Activated CD4-positive, alpha-beta memory T cell treated with anti-CD3 and anti-CD28 coated beads, Interleukin-2, amount 10 ng/mL, durations not matched to agents 7 days and 5 days (primary cell): ENCODE measurements at regions of chr2 and their contacts with region 1.

Region 1: DNA sequence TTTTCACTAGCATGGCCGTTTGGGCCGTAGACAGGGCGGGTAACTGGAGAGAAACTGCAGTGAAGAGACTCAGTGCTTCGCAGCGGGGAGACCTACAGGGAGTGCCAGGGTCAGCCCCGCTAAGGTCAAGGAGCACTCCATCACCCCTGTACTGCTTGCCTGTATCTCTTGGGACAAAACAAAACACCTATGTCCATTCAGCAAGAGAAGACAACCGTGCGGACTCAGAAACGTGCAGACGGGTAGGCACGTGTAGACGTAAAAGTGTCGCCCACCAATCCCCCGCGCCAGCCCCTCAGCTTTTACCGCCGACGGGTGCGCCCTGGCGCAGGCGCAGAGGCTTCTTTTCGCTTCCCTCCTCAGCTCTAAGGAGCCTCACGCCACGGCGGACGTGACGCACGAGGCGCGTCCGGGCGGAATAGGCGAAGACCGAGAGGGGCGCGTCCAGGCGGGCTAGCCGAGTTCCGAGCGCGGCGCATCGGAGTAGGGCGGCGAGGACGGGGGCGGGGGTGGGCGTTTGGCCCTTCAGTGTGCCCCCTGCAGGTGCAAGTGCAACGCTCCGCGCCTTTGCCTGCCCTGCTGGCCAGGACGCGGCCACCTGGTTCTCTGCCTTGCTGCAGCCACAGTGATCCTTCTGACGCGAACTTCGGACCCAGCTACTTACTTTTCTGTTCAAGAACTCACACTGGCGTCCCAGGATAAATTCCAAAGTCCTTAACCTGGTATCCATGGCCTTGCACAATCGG is 3.3 kb upstream of the SOS1 start:
- DNase-seq: peak; percentile 97
- H3K4me3 Mint-ChIP-seq: peak overlapping the region; percentile 89
- H3K27ac Mint-ChIP-seq: peak overlapping the region; percentile 92
- H3K4me1 Mint-ChIP-seq: peaks cover 63% of the 10 kb centered on the region
- H3K27me3 Mint-ChIP-seq: no peaks in the 10 kb centered on the region

Region 2: GRCh38 chr2:39107156-39107555 is 17.0 kb before region 1 on chr2:
- CTCF ChIA-PET with region 1: interaction called, 6 read pairs
- POLR2A ChIA-PET with region 1: interaction called, 125 read pairs
- DNase-seq: no peak
- H3K4me3 Mint-ChIP-seq: no peak overlapping the region
- H3K27ac Mint-ChIP-seq: peak overlapping the region; percentile 40
- H3K4me1 Mint-ChIP-seq: peaks cover 72% of the 10 kb centered on the region
- H3K27me3 Mint-ChIP-seq: no peaks in the 10 kb centered on the region

Region 3: GRCh38 chr2:39141331-39142271 is 17.4 kb after region 1 on chr2:
- CTCF ChIA-PET with region 1: interaction called, 42 read pairs
- POLR2A ChIA-PET with region 1: interaction called, 770 read pairs
- DNase-seq: peak; percentile 71
- H3K4me3 Mint-ChIP-seq: no peak overlapping the region
- H3K27ac Mint-ChIP-seq: peak overlapping the region; percentile 93
- H3K4me1 Mint-ChIP-seq: peaks cover 72% of the 10 kb centered on the region
- H3K27me3 Mint-ChIP-seq: no peaks in the 10 kb centered on the region

Region 4: DNA sequence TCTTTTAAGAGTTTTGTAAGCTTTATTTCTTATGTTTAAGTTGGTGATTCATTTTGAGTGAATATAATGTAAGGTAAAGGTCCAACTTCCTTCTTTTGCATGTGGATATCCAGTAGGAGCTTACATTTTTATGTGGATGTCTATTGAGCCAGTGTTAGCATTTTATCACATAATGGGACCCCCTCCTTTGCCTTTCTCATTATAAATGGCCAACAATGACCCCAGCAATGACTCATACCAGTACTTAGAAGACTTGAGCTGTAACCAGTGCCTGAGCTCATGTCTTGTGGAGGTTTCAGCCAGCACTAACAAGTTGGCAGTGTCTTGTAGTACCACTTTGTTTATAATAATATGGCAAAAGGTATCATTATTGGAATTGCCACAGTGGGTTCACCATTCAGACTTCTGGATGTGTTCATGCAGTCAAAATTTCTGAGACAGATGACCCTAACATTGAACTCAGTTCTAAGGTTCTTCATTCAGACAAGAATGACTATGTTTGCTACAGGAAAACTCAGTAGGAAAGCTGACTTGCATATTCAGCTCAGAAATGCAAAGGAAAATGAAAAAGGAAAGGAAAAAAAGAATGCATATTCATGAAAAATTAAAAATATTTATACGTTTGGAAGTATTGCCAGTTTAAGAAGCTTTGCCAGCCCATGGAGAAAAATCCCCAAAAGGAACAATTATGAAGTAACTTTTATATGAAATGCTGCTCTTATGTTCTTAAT is 78.6 kb after region 1 on chr2:
- CTCF ChIA-PET with region 1: interaction called, 3 read pairs
- POLR2A ChIA-PET with region 1: interaction called, 16 read pairs
- DNase-seq: no peak
- H3K4me3 Mint-ChIP-seq: no peak overlapping the region
- H3K27ac Mint-ChIP-seq: peak overlapping the region; percentile 38
- H3K4me1 Mint-ChIP-seq: peaks cover 26% of the 10 kb centered on the region
- H3K27me3 Mint-ChIP-seq: no peaks in the 10 kb centered on the region

Region 5: DNA sequence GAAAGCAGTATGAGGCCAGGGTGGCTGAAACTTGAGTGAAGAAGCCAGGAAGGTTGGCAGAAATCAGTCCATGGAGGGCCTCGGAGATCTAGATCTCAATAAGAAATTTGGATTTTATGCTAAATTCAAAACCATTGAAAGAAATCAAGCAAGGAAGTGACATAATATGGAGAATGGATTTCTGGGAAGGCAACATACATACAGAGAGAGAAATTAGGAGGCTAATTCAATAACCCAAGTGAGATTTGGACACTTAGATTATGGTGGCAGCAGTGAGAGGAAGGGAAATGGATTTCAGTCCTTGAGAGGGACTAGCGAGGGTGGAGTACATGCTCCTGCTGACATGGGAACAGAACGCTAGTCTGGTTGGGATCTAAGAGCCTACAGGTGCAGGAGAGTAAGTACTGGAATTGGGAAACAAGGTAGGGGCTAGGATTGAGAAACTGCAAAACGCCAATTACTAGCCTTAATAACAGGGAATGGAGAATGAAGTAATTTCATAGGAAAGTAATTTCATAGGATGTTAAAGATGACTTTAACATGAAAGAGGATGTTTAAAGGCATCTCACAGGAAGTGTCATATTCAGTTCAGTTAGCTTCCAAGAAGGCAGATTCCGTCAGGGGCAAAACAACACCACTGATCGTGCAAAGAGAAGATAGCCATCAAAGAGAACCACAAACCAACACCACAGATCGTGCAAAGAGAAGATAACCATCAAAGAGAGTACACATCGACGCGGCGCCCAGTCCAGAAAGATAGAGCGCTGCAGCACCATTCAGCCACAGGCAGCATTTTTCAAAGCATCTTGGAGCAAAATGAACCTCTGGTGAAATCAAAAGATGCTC is 92.4 kb after region 1 on chr2:
- CTCF ChIA-PET with region 1: interaction called, 15 read pairs
- POLR2A ChIA-PET with region 1: interaction called, 543 read pairs
- DNase-seq: peak; percentile 89
- H3K4me3 Mint-ChIP-seq: peak overlapping the region; percentile 45
- H3K27ac Mint-ChIP-seq: peak overlapping the region; percentile 95
- H3K4me1 Mint-ChIP-seq: peaks cover 74% of the 10 kb centered on the region
- H3K27me3 Mint-ChIP-seq: no peaks in the 10 kb centered on the region

Region 6: GRCh38 chr2:39243476-39244123 is 119.4 kb after region 1 on chr2 and contains the start of gene CDKL4:
- CTCF ChIA-PET with region 1: no interaction called
- POLR2A ChIA-PET with region 1: interaction called, 12 read pairs
- DNase-seq: peak; percentile 57
- H3K4me3 Mint-ChIP-seq: peak within 1 kb of the TSS; percentile 67
- H3K27ac Mint-ChIP-seq: peak within 1 kb of the TSS; percentile 20
- H3K4me1 Mint-ChIP-seq: peaks cover 23% of the 10 kb centered on the region
- H3K27me3 Mint-ChIP-seq: peaks cover 6% of the 10 kb centered on the region
- total RNA-seq, gene CDKL4: 0.25 TPM in 1 of 2 experiments, not detected in the other